Mammary epithelial cell (primary cell): ENCODE measurements at regions of chr9 and their contacts with region 1.

Region 1: GRCh38 chr9:108272349-108272899 is 583.4 kb downstream of the ACTL7B start:
- DNase-seq: peak; percentile 55
- H3K4me3 ChIP-seq: no peak overlapping the region
- H3K27ac ChIP-seq: peak overlapping the region; percentile 35
- H3K4me1 ChIP-seq: peaks cover 25% of the 10 kb centered on the region
- H3K27me3 ChIP-seq: no peaks in the 10 kb centered on the region
- CTCF ChIP-seq: peak; percentile 61 to 70

Region 2: GRCh38 chr9:107484117-107484723 is 788.2 kb before region 1 on chr9:
- CTCF ChIA-PET with region 1: interaction called, 3 read pairs
- dilution Hi-C with region 1: no loop called
- in situ Hi-C with region 1: loop called in 1 of 2 experiments (anchors 10 kb)
- intact Hi-C with region 1: loop called (anchors 1 kb)
- DNase-seq: peak; percentile 60
- H3K4me3 ChIP-seq: no peak overlapping the region
- H3K27ac ChIP-seq: no peak overlapping the region
- H3K4me1 ChIP-seq: peaks cover 27% of the 10 kb centered on the region
- H3K27me3 ChIP-seq: no peaks in the 10 kb centered on the region
- CTCF ChIP-seq: peak; percentile 34 to 63

Region 3: DNA sequence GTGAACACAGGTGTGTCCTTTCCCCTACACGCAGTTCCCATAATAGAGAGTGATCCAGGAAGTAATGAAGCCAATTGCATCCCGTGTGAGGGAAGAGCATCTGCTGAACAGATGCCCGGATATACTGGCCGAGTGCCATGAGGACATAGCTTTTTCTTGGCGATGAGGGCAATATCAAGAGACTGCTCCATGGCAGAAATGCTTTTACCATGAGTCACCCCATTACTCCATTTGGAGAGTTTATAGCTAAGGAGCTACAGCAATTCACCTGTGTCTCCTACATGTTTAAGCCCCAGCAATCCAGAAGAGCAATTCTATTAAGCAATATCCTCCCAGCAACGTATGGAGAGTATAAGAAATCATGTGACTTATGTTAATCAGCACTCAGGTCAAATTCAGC is 560.9 kb before region 1 on chr9:
- CTCF ChIA-PET with region 1: no interaction called
- dilution Hi-C with region 1: no loop called
- in situ Hi-C with region 1: no loop called
- intact Hi-C with region 1: loop called (anchors 1 kb)
- DNase-seq: peak; percentile 88
- H3K4me3 ChIP-seq: no peak overlapping the region
- H3K27ac ChIP-seq: peak overlapping the region; percentile 75
- H3K4me1 ChIP-seq: peaks cover 53% of the 10 kb centered on the region
- H3K27me3 ChIP-seq: no peaks in the 10 kb centered on the region
- CTCF ChIP-seq: no peak

Region 4: GRCh38 chr9:107856633-107857032 is 415.8 kb before region 1 on chr9:
- CTCF ChIA-PET with region 1: no interaction called
- dilution Hi-C with region 1: no loop called
- in situ Hi-C with region 1: no loop called
- intact Hi-C with region 1: loop called (anchors 10 kb)
- DNase-seq: no peak
- H3K4me3 ChIP-seq: no peak overlapping the region
- H3K27ac ChIP-seq: no peak overlapping the region
- H3K4me1 ChIP-seq: no peaks in the 10 kb centered on the region
- H3K27me3 ChIP-seq: no peaks in the 10 kb centered on the region
- CTCF ChIP-seq: no peak

Region 5: DNA sequence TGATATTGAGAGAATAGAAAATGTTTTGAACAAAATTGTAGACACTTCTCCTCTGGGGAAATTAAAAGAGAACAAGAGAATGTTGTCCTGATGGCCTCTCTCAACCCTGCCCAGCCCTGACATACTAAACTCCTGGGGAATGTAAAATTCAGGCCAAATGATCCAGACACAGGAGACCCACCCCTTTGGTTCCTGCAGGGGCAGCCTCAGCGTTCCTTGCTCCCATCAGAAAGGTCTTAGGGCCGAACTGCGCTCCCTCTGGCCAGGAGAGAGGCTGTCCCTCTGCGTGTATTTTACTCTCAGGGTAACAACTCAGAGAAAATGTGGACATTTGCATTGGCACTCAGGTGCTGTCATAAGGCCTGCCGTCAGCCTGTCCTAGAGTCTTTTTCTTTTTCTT is 166.5 kb before region 1 on chr9:
- CTCF ChIA-PET with region 1: no interaction called
- dilution Hi-C with region 1: no loop called
- in situ Hi-C with region 1: no loop called
- intact Hi-C with region 1: no loop called
- DNase-seq: no peak
- H3K4me3 ChIP-seq: no peak overlapping the region
- H3K27ac ChIP-seq: no peak overlapping the region
- H3K4me1 ChIP-seq: peaks cover 10% of the 10 kb centered on the region
- H3K27me3 ChIP-seq: no peaks in the 10 kb centered on the region
- CTCF ChIP-seq: no peak

Region 6: GRCh38 chr9:108259917-108260675 is 12.3 kb before region 1 on chr9:
- CTCF ChIA-PET with region 1: no interaction called
- dilution Hi-C with region 1: no loop called
- in situ Hi-C with region 1: no loop called
- intact Hi-C with region 1: loop called (anchors 1 kb)
- DNase-seq: peak; percentile 91
- H3K4me3 ChIP-seq: no peak overlapping the region
- H3K27ac ChIP-seq: peak overlapping the region; percentile 67
- H3K4me1 ChIP-seq: peaks cover 12% of the 10 kb centered on the region
- H3K27me3 ChIP-seq: no peaks in the 10 kb centered on the region
- CTCF ChIP-seq: no peak

Region 7: DNA sequence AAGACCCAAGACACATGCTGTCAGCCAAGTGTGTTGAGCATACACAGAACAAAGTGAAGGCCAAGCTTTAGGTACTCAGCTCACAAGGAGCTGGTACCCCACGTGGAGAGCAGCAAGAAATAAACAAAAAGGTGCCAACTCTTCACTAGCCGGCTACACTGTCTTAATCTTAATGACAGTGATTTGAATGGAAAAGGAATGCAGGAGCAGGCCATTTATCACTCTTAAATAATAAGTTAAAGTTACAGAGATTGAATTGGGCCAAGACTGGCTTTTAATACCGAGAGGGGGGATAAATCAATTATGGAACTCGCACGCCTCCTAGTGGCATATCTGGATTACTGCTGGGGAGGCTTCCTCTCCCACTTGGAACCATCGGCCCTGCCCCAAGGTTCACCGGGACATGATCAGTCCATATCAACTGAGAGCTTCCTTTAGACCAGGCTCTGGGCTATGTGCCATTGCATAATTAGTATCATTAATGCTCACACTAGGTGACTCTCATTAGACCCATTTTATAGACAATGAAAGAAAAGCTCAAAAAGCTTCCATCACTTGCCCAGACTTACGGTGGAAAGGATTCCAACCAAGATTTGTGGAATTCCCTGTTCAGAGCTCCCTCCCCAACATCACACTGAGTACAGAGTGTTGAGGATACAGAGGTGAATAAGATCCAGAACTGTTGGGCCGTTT is 489.4 kb after region 1 on chr9:
- CTCF ChIA-PET with region 1: no interaction called
- dilution Hi-C with region 1: no loop called
- in situ Hi-C with region 1: no loop called
- intact Hi-C with region 1: loop called (anchors 2 kb)
- DNase-seq: peak; percentile 31
- H3K4me3 ChIP-seq: no peak overlapping the region
- H3K27ac ChIP-seq: no peak overlapping the region
- H3K4me1 ChIP-seq: no peaks in the 10 kb centered on the region
- H3K27me3 ChIP-seq: no peaks in the 10 kb centered on the region
- CTCF ChIP-seq: peak; percentile 86 to 95